ENCODE measurements at regions of chr11 and their contacts with region 1.

Region 1: GRCh38 chr11:27158722-27159679 is 118.4 kb downstream of the BBOX1 start:
- DNase-seq: peak; percentile 46
- H3K4me3 ChIP-seq: no peak overlapping the region
- H3K27ac ChIP-seq: no peak overlapping the region
- H3K4me1 ChIP-seq: no peaks in the 10 kb centered on the region
- H3K27me3 ChIP-seq: no peaks in the 10 kb centered on the region
- CTCF ChIP-seq: peak; percentile 79 to 89 (median 82)
- EP300 ChIP-seq: no peak
- POLR2A ChIP-seq: no peak

Region 2: GRCh38 chr11:26297189-26297975 is 861.6 kb before region 1 on chr11:
- in situ Hi-C with region 1: loop called (anchors 10 to 25 kb)
- intact Hi-C with region 1: no loop called
- DNase-seq: no peak
- H3K4me3 ChIP-seq: no peak overlapping the region
- H3K27ac ChIP-seq: no peak overlapping the region
- H3K4me1 ChIP-seq: no peaks in the 10 kb centered on the region
- H3K27me3 ChIP-seq: no peaks in the 10 kb centered on the region
- CTCF ChIP-seq: peak; percentile 45 to 65 (median 50)
- EP300 ChIP-seq: no peak
- POLR2A ChIP-seq: no peak

Region 3: DNA sequence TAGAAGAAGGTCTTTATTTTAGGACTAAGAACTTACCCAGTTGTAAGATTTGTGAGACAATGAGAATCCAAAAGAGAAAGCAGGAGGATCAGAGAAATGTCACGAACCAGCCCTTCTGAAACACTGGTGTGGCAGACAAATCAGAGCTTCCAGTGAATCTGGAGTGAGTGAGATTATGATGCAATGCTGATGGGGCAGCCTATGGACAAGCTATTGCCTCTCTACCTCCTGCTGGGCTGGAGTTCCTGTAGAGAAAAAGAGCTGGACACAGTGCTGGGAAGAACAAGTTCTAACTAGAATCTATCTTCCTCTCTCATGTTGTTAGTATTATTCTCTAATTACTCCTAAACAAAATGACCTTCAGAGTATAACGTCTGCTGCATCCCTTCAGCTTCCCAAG is 839.1 kb before region 1 on chr11:
- in situ Hi-C with region 1: loop called in 1 of 4 experiments (anchors 25 kb)
- intact Hi-C with region 1: no loop called
- DNase-seq: no peak
- H3K4me3 ChIP-seq: no peak overlapping the region
- H3K27ac ChIP-seq: no peak overlapping the region
- H3K4me1 ChIP-seq: no peaks in the 10 kb centered on the region
- H3K27me3 ChIP-seq: no peaks in the 10 kb centered on the region
- CTCF ChIP-seq: no peak
- EP300 ChIP-seq: no peak
- POLR2A ChIP-seq: no peak

Region 4: GRCh38 chr11:26704249-26704648 is 454.8 kb before region 1 on chr11:
- in situ Hi-C with region 1: no loop called
- intact Hi-C with region 1: no loop called
- DNase-seq: peak; percentile 27
- H3K4me3 ChIP-seq: no peak overlapping the region
- H3K27ac ChIP-seq: peak overlapping the region; percentile 71 to 75 (median 72)
- H3K4me1 ChIP-seq: peaks cover 3 to 70% (median 36%) of the 10 kb centered on the region in 4 donors
- H3K27me3 ChIP-seq: no peaks in the 10 kb centered on the region
- CTCF ChIP-seq: no peak
- EP300 ChIP-seq: no peak
- POLR2A ChIP-seq: no peak

Region 5: DNA sequence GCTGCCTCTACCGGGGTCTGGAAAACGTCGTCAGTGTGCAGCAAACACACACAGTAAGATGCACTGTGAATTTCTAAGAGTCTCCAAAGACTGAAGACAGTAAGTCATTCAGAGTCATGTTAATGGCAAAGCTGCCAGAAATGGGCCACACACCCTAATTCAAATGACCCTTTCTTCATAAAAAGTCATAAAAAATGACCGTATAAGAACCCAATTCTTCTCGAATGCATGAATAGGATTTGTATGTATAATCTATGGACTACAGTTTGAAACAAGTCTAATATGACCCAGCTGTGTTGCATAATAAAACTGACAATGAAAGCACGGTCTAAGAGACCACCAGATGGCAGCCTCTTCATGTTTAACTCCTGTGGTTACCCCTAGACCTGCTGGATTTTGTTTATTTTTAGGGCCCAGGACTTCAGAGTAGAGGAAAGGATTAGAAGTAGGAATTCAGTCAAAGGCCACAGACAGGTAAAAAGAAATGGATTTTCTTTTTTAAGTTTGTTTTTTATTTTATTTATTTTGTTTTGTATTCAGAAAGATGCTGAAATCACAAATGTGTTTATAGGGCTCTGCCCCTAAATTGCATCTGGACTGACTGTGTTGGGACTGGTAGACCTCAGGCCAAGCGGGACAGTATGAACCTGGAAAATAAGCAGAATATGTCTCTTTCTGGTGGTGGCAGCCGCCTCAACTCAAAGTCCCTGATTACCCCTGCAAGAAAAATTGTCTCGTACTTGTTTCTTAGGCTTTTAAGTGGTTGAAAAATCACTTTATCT is 405.1 kb before region 1 on chr11:
- in situ Hi-C with region 1: loop called in 3 of 4 experiments (anchors 5 to 25 kb)
- intact Hi-C with region 1: loop called (anchors 1 kb)
- DNase-seq: peak; percentile 35
- H3K4me3 ChIP-seq: no peak overlapping the region
- H3K27ac ChIP-seq: no peak overlapping the region
- H3K4me1 ChIP-seq: peaks cover 0 to 12% (median 2%) of the 10 kb centered on the region in 4 donors
- H3K27me3 ChIP-seq: no peaks in the 10 kb centered on the region
- CTCF ChIP-seq: peak; percentile 57 to 72 (median 66)
- EP300 ChIP-seq: no peak
- POLR2A ChIP-seq: no peak